ENCODE measurements at regions of chr3 and their contacts with region 1.

Region 1: DNA sequence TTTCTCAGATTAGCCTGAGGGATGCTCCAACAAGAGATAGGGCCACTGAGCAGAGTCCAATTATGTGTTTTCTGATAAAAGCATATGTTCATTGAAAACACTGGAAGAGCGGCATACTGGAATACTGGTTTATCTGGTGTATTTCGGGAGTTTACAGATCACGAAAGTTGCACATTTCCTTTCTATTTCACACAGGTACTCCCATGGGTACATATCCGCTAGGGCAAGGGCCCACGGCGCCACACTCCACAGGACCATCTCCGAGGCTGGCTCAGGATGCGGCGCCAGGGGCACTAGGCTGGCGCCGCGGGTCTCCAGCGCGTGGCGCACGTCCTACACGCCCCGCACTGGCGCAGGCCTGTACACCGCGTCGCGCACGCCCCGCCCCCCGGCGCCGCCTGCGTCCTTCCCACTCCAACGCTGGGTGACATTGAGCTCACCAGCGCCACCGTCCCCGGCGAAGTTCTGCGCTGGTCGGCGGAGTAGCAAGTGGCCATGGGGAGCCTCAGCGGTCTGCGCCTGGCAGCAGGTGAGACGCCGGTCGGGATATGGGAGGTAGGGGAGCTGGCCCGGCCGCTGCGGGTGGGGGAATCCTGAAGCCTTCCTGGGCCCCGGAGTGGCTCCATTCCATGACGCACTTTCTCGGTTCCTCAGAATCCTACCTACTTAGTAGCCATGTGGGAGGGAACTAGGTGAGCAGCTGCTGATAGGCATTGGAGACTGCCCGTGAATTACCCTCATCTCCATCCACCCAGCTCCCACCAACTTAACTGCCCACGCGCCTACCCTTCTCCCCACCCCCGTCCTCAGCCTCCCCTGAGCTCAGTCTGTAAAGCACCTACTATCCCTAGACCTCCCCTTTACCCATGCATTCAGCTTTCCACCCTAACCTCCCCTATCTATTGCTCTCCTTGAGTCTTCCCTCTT is at the start of gene FAM162A:
- DNase-seq: peak; percentile 96
- ATAC-seq: peak; percentile 96
- H3K4me3 ChIP-seq: peak within 1 kb of the TSS; percentile 75 to 95 (median 86)
- H3K4me3 Mint-ChIP-seq: peak within 1 kb of the TSS; percentile 93
- H3K27ac ChIP-seq: peak within 1 kb of the TSS; percentile 82 to 83
- H3K27ac Mint-ChIP-seq: peak within 1 kb of the TSS; percentile 94
- H3K4me1 ChIP-seq: peaks cover 11 to 15% of the 10 kb centered on the region in 2 donors
- H3K4me1 Mint-ChIP-seq: peaks cover 37% of the 10 kb centered on the region
- H3K27me3 ChIP-seq: no peaks in the 10 kb centered on the region
- H3K27me3 Mint-ChIP-seq: no peaks in the 10 kb centered on the region
- CTCF ChIP-seq: peak; percentile 68
- total RNA-seq, gene FAM162A: 13.9 and 17.5 TPM in 2 replicates

Region 2: GRCh38 chr3:120596116-120596852 is 1787.8 kb before region 1 on chr3 and contains the start of gene NDUFB4:
- CTCF ChIA-PET with region 1: no interaction called
- POLR2A ChIA-PET with region 1: no interaction called
- intact Hi-C with region 1: loop called (anchors 5 kb)
- DNase-seq: peak; percentile 97
- ATAC-seq: peak; percentile 97
- H3K4me3 ChIP-seq: peak within 1 kb of the TSS; percentile 59 to 94 (median 86)
- H3K4me3 Mint-ChIP-seq: peak within 1 kb of the TSS; percentile 92
- H3K27ac ChIP-seq: peak within 1 kb of the TSS; percentile 72 to 95
- H3K27ac Mint-ChIP-seq: peak within 1 kb of the TSS; percentile 96
- H3K4me1 ChIP-seq: peaks cover 15 to 19% of the 10 kb centered on the region in 2 donors
- H3K4me1 Mint-ChIP-seq: peaks cover 11% of the 10 kb centered on the region
- H3K27me3 ChIP-seq: no peaks in the 10 kb centered on the region
- H3K27me3 Mint-ChIP-seq: no peaks in the 10 kb centered on the region
- CTCF ChIP-seq: no peak
- total RNA-seq, gene NDUFB4: 58.1 and 68.4 TPM in 2 replicates

Region 3: DNA sequence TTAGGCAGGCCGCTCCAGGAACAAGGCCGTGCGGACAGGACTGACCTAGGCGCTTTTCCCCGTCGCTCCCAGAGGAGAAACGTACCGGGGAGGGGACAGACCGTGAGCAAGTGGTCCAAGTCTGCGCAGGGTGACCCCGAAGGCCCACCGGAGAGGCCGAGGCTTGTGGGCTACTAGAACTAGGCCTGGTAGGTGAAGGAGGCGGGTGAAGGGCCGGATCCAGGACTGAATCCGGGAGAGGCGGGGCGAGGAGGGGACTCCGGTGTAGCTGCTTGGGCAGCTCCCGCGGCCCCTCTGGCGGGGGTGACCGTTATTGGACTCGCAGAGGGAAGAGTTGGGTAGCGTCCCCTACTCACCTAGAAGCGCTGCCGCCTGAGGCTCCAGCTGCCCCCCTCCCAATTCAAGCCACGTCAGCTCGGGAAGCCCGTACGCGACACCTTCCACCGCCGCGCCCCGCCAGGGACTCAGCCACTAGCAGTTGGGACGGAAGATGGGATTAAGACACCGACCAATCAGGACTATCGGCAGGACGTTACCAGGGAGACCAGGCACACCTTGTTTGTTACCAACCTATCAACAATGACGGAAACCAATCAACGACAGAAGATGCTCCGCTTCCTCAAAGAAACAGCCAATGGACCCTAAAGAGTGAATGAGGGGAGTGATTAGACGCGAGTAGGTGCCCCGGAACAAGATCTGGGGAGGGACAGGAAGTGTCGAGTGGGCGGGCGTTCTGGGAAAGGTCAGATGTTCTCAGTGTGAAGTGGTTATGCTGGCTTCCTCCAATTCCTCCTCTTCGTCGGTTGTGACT is 634.6 kb before region 1 on chr3 and contains the start of gene GOLGB1:
- CTCF ChIA-PET with region 1: no interaction called
- POLR2A ChIA-PET with region 1: no interaction called
- intact Hi-C with region 1: loop called (anchors 1 kb)
- DNase-seq: peak; percentile 97
- ATAC-seq: peak; percentile 93
- H3K4me3 ChIP-seq: peak within 1 kb of the TSS; percentile 75 to 100 (median 96)
- H3K4me3 Mint-ChIP-seq: no peak within 1 kb of the TSS
- H3K27ac ChIP-seq: peak within 1 kb of the TSS; percentile 90 to 98
- H3K27ac Mint-ChIP-seq: no peak within 1 kb of the TSS
- H3K4me1 ChIP-seq: peaks cover 18 to 19% of the 10 kb centered on the region in 2 donors
- H3K4me1 Mint-ChIP-seq: peaks cover 11% of the 10 kb centered on the region
- H3K27me3 ChIP-seq: no peaks in the 10 kb centered on the region
- H3K27me3 Mint-ChIP-seq: no peaks in the 10 kb centered on the region
- CTCF ChIP-seq: no peak
- total RNA-seq, gene GOLGB1: 58.7 and 64.3 TPM in 2 replicates

Region 4: DNA sequence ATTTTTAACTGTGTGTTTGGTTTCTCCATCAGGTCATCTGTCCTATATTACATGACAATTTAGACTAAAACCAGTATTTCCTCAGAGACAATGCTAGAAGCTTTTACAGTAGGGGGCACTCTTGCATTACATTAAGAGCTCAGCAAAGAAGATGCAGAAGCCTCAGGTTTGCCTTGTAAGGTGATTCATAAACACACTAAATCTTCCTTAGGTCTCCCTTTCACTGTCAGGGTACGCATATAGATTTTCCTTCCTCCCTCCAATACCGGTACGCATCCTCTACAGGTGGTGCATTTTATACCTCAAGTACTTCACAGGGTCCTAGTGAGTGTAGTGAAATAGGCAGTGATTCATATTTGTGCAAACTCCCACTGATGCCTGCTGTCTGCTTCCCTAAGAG is 282.4 kb before region 1 on chr3:
- CTCF ChIA-PET with region 1: interaction called, 3 read pairs
- POLR2A ChIA-PET with region 1: interaction called, 3 read pairs
- intact Hi-C with region 1: loop called (anchors 2 kb)
- DNase-seq: peak; percentile 78
- ATAC-seq: peak; percentile 59
- H3K4me3 ChIP-seq: no peak overlapping the region
- H3K4me3 Mint-ChIP-seq: peak overlapping the region; percentile 82
- H3K27ac ChIP-seq: no peak overlapping the region
- H3K27ac Mint-ChIP-seq: peak overlapping the region; percentile 11
- H3K4me1 ChIP-seq: peaks cover 6 to 13% of the 10 kb centered on the region in 2 donors
- H3K4me1 Mint-ChIP-seq: peaks cover 24% of the 10 kb centered on the region
- H3K27me3 ChIP-seq: no peaks in the 10 kb centered on the region
- H3K27me3 Mint-ChIP-seq: no peaks in the 10 kb centered on the region
- CTCF ChIP-seq: peak; percentile 73

Region 5: DNA sequence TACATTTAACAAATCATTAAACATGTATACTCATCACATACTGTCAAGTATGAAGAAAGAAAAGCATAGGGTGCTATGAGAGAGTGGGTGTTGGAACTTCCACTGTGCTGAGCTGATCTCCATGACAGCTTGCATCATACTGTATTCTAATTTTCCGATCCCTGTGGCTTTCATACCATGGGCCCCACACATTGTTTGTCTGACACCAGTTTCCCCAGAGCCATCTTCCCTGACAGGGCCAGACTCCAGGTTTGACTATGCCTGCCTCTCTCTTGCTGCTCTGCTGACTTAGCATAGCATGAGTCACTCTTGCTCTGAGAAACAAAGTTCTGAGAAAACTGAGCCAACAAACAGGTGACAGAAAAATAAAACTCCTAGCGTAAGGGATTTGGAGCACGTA is 237.6 kb before region 1 on chr3:
- CTCF ChIA-PET with region 1: no interaction called
- POLR2A ChIA-PET with region 1: no interaction called
- intact Hi-C with region 1: no loop called
- DNase-seq: no peak
- ATAC-seq: no peak
- H3K4me3 ChIP-seq: no peak overlapping the region
- H3K4me3 Mint-ChIP-seq: no peak overlapping the region
- H3K27ac ChIP-seq: no peak overlapping the region
- H3K27ac Mint-ChIP-seq: no peak overlapping the region
- H3K4me1 ChIP-seq: no peaks in the 10 kb centered on the region
- H3K4me1 Mint-ChIP-seq: no peaks in the 10 kb centered on the region
- H3K27me3 ChIP-seq: no peaks in the 10 kb centered on the region
- H3K27me3 Mint-ChIP-seq: peaks cover 3% of the 10 kb centered on the region
- CTCF ChIP-seq: no peak

Region 6: GRCh38 chr3:122322095-122323075 is 61.6 kb before region 1 on chr3:
- CTCF ChIA-PET with region 1: no interaction called
- POLR2A ChIA-PET with region 1: no interaction called
- intact Hi-C with region 1: no loop called
- DNase-seq: no peak
- ATAC-seq: no peak
- H3K4me3 ChIP-seq: no peak overlapping the region
- H3K4me3 Mint-ChIP-seq: no peak overlapping the region
- H3K27ac ChIP-seq: no peak overlapping the region
- H3K27ac Mint-ChIP-seq: no peak overlapping the region
- H3K4me1 ChIP-seq: no peaks in the 10 kb centered on the region
- H3K4me1 Mint-ChIP-seq: no peaks in the 10 kb centered on the region
- H3K27me3 ChIP-seq: no peaks in the 10 kb centered on the region
- H3K27me3 Mint-ChIP-seq: peaks cover 4% of the 10 kb centered on the region
- CTCF ChIP-seq: no peak

Region 7: GRCh38 chr3:122356415-122356814 is 27.6 kb before region 1 on chr3:
- CTCF ChIA-PET with region 1: no interaction called
- POLR2A ChIA-PET with region 1: no interaction called
- intact Hi-C with region 1: no loop called
- DNase-seq: peak; percentile 20
- ATAC-seq: no peak
- H3K4me3 ChIP-seq: no peak overlapping the region
- H3K4me3 Mint-ChIP-seq: no peak overlapping the region
- H3K27ac ChIP-seq: no peak overlapping the region
- H3K27ac Mint-ChIP-seq: no peak overlapping the region
- H3K4me1 ChIP-seq: no peaks in the 10 kb centered on the region
- H3K4me1 Mint-ChIP-seq: no peaks in the 10 kb centered on the region
- H3K27me3 ChIP-seq: no peaks in the 10 kb centered on the region
- H3K27me3 Mint-ChIP-seq: no peaks in the 10 kb centered on the region
- CTCF ChIP-seq: peak; percentile 31

Region 8: DNA sequence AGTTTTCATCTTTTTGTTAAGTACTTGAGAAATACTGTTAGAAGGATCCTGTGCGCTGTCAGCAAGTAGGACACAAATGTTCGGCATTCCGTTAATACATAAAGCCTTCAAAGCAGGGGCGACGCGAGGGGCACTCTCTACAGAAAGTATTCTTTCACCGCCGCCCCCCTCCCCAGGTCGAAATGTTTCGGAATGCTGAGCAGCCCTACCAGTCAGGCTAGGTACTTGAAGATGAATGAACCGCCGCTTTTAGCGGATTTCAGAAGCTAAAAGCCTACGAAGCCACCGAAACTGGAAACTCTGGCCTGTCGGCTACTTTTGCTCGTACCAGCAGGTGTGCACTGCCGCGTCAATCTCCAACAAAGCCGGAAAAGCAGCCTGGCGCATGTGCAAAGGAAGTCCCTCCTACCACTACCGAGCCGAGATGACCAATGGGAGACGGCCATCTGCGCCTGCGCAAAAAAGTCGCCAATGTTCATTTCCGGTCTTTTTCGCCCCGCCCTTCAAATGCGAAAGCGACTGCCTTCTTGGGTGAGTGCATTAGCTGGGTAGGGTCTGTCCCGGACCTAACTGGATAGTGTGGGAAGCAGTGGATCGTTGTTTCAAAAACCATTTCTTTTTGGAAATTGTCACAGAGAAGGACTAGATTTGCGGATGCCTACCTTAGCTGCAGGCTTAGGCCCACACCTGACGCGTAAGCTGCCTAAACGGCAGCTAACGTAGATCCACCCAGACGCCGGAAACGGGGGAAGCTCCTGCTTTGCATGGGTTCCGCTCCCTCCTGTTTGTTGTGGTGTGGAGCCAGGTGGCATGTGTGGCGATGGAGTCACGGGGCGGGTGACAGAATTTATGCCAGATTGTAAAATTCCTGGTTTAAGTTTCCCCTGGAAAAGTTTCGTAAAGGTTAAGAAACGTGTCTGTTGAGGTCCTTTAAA is 32.0 kb after region 1 on chr3 and contains the start of gene WDR5B:
- CTCF ChIA-PET with region 1: interaction called, 20 read pairs
- POLR2A ChIA-PET with region 1: interaction called, 25 read pairs
- intact Hi-C with region 1: loop called (anchors 1 kb)
- DNase-seq: peak; percentile 100
- ATAC-seq: peak; percentile 88
- H3K4me3 ChIP-seq: peak within 1 kb of the TSS; percentile 74 to 98 (median 83)
- H3K4me3 Mint-ChIP-seq: peak within 1 kb of the TSS; percentile 100
- H3K27ac ChIP-seq: peak within 1 kb of the TSS; percentile 87 to 97
- H3K27ac Mint-ChIP-seq: peak within 1 kb of the TSS; percentile 100
- H3K4me1 ChIP-seq: peaks cover 20 to 26% of the 10 kb centered on the region in 2 donors
- H3K4me1 Mint-ChIP-seq: peaks cover 55% of the 10 kb centered on the region
- H3K27me3 ChIP-seq: no peaks in the 10 kb centered on the region
- H3K27me3 Mint-ChIP-seq: no peaks in the 10 kb centered on the region
- CTCF ChIP-seq: no peak
- total RNA-seq, gene WDR5B: 11.6 and 12.3 TPM in 2 replicates

Region 9: DNA sequence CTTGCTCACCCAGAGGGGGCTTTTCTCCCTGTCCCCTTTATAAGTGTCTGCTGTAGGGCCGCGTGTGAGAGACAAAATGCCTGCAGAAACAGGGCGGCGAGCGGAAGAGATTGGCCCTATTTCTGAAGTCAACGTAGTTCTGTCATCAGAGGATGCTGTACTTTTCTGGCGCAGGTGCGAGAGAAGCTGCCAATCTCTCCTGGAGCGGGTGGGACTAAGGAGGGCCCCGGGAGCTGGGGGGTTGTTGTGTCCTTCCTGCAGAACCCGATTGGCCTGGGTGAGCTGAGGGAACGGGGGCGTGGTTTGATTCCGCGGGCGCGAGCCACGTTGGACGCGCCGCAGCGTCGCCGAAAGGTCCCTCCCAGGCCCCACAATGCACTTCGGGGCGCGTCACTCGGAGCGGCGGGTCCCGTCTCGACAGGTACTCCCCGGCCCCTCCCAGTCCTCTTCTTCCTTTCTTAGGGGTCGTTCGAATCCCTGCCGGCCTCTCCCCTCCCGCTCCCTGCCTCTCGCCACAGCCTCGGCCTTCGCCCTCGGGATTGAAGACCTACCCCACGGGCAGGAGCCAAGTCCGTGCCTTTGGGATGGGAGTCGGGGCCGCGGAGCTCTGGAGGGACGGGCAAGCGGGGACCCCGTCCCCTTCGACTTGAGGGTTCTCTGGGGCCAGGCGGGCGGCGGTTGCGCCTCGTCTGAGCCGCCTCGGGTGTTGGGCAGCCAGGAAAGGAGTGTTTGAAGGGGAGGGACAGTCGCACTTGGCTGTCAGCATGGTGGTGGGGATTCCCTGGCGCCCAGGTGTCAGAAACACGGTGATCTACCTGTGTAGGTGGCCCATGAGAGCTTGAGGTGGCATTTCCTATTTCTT is 817.8 kb after region 1 on chr3 and contains the start of gene SEC22A:
- CTCF ChIA-PET with region 1: no interaction called
- POLR2A ChIA-PET with region 1: interaction called, 5 read pairs
- intact Hi-C with region 1: loop called (anchors 5 kb)
- DNase-seq: peak; percentile 95
- ATAC-seq: peak; percentile 96
- H3K4me3 ChIP-seq: peak within 1 kb of the TSS; percentile 86 to 99 (median 90)
- H3K4me3 Mint-ChIP-seq: peak within 1 kb of the TSS; percentile 95
- H3K27ac ChIP-seq: peak within 1 kb of the TSS; percentile 92 to 96
- H3K27ac Mint-ChIP-seq: peak within 1 kb of the TSS; percentile 94
- H3K4me1 ChIP-seq: peaks cover 13 to 18% of the 10 kb centered on the region in 2 donors
- H3K4me1 Mint-ChIP-seq: peaks cover 22% of the 10 kb centered on the region
- H3K27me3 ChIP-seq: no peaks in the 10 kb centered on the region
- H3K27me3 Mint-ChIP-seq: no peaks in the 10 kb centered on the region
- CTCF ChIP-seq: no peak
- total RNA-seq, gene SEC22A: 16.1 and 19.3 TPM in 2 replicates

Measured in B cell (primary cell).